IMR-90 (cell line): ENCODE measurements at regions of chr10 and their contacts with region 1.

Region 1: GRCh38 chr10:110871298-110872084 is at the start of gene PDCD4:
- DNase-seq: peak; percentile 96
- ATAC-seq: peak; percentile 92
- H3K4me3 ChIP-seq: peak within 1 kb of the TSS; percentile 54
- H3K27ac ChIP-seq: peak within 1 kb of the TSS; percentile 89
- H3K4me1 ChIP-seq: peaks cover 4% of the 10 kb centered on the region
- H3K27me3 ChIP-seq: no peaks in the 10 kb centered on the region
- CTCF ChIP-seq: no peak
- POLR2A ChIP-seq: peak; percentile 97
- RAD21 ChIP-seq: no peak
- total RNA-seq, gene PDCD4: 10.9 and 46.9 TPM in 2 replicates

Region 2: GRCh38 chr10:110671788-110672579 is 199.5 kb before region 1 on chr10:
- CTCF ChIA-PET with region 1: no interaction called
- POLR2A ChIA-PET with region 1: no interaction called
- dilution Hi-C with region 1: no loop called
- in situ Hi-C with region 1: no loop called
- intact Hi-C with region 1: loop called (anchors 2 kb)
- DNase-seq: peak; percentile 67
- ATAC-seq: peak; percentile 99
- H3K4me3 ChIP-seq: peak overlapping the region; percentile 54
- H3K27ac ChIP-seq: peak overlapping the region; percentile 44
- H3K4me1 ChIP-seq: no peaks in the 10 kb centered on the region
- H3K27me3 ChIP-seq: peaks cover 13% of the 10 kb centered on the region
- CTCF ChIP-seq: peak; percentile 99
- POLR2A ChIP-seq: no peak
- RAD21 ChIP-seq: peak; percentile 66

Region 3: GRCh38 chr10:110746254-110746826 is 125.2 kb before region 1 on chr10:
- CTCF ChIA-PET with region 1: no interaction called
- POLR2A ChIA-PET with region 1: no interaction called
- dilution Hi-C with region 1: no loop called
- in situ Hi-C with region 1: no loop called
- intact Hi-C with region 1: loop called (anchors 1 kb)
- DNase-seq: peak; percentile 71
- ATAC-seq: peak; percentile 90
- H3K4me3 ChIP-seq: no peak overlapping the region
- H3K27ac ChIP-seq: no peak overlapping the region
- H3K4me1 ChIP-seq: no peaks in the 10 kb centered on the region; the same call in 1 of the 2 replicates
- H3K27me3 ChIP-seq: peaks cover 5% of the 10 kb centered on the region
- CTCF ChIP-seq: peak; percentile 81
- POLR2A ChIP-seq: 0 out of 2 replicates have a peak, but pooled peaks have one; percentile 30
- RAD21 ChIP-seq: peak; percentile 90

Region 4: GRCh38 chr10:110803830-110804338 is 67.6 kb before region 1 on chr10:
- CTCF ChIA-PET with region 1: interaction called, 3 read pairs
- POLR2A ChIA-PET with region 1: no interaction called
- dilution Hi-C with region 1: no loop called
- in situ Hi-C with region 1: no loop called
- intact Hi-C with region 1: loop called (anchors 2 kb)
- DNase-seq: peak; percentile 24
- ATAC-seq: peak; percentile 70
- H3K4me3 ChIP-seq: no peak overlapping the region
- H3K27ac ChIP-seq: no peak overlapping the region
- H3K4me1 ChIP-seq: peaks cover 7% of the 10 kb centered on the region; the same call in 1 of the 2 replicates
- H3K27me3 ChIP-seq: peaks cover 5% of the 10 kb centered on the region
- CTCF ChIP-seq: peak; percentile 49
- POLR2A ChIP-seq: no peak
- RAD21 ChIP-seq: peak; percentile 53

Region 5: DNA sequence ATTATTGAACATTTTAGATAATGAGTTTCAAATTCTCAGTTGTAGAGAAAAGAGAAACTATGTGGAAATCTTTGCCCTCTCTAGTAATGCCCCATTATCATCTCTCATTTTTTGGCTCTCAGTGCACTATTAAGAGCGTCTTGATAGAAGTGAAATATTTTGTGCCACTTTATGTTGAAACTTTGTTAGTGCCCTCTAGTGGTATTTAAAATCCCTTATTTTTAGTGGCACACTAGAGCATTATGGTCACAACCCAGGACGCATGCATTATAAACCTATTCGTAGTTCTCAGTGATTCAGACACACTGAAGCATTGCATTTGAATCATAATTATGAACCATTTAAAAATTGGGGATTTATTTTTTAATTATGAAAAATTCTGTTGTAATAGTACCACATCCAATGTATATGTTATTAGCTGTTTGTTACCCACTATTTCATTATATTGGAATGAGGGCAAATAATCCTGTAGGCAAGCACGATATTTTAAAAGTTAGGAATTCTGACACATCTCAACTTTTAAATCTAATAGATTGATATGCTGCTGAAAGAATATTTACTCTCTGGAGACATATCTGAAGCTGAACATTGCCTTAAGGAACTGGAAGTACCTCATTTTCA is 22.2 kb after region 1 on chr10:
- CTCF ChIA-PET with region 1: no interaction called
- POLR2A ChIA-PET with region 1: no interaction called
- dilution Hi-C with region 1: no loop called
- in situ Hi-C with region 1: no loop called
- intact Hi-C with region 1: loop called (anchors 2 kb)
- DNase-seq: peak; percentile 46
- ATAC-seq: peak; percentile 72
- H3K4me3 ChIP-seq: no peak overlapping the region
- H3K27ac ChIP-seq: no peak overlapping the region
- H3K4me1 ChIP-seq: peaks cover 6% of the 10 kb centered on the region
- H3K27me3 ChIP-seq: no peaks in the 10 kb centered on the region
- CTCF ChIP-seq: peak; percentile 52
- POLR2A ChIP-seq: no peak
- RAD21 ChIP-seq: peak; percentile 48

Region 6: DNA sequence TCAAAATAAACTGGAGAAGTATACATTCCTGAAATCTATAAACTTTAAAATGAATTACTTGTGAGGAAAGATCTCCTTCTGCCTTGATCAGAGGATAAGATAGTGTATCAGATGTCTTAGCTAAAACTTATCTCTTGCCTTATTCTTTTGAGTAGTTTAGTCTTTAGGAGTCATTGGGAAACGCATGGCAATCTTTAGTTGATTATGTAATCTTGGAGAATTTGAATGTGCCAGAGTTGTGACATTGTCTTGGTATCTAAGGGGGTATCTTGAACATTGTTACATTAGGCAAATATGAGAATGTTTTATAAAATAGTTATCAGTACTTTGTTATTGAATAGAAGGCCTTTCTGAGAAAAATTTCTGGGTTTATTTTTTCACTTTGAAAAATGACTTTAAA is 143.7 kb after region 1 on chr10:
- CTCF ChIA-PET with region 1: no interaction called
- POLR2A ChIA-PET with region 1: interaction called, 11 read pairs
- dilution Hi-C with region 1: no loop called
- in situ Hi-C with region 1: no loop called
- intact Hi-C with region 1: no loop called
- DNase-seq: no peak
- ATAC-seq: no peak
- H3K4me3 ChIP-seq: no peak overlapping the region
- H3K27ac ChIP-seq: no peak overlapping the region
- H3K4me1 ChIP-seq: no peaks in the 10 kb centered on the region
- H3K27me3 ChIP-seq: no peaks in the 10 kb centered on the region
- CTCF ChIP-seq: no peak
- POLR2A ChIP-seq: no peak
- RAD21 ChIP-seq: no peak

Region 7: GRCh38 chr10:111525696-111526095 is 654.2 kb after region 1 on chr10:
- CTCF ChIA-PET with region 1: no interaction called
- POLR2A ChIA-PET with region 1: no interaction called
- dilution Hi-C with region 1: no loop called
- in situ Hi-C with region 1: no loop called
- intact Hi-C with region 1: no loop called
- DNase-seq: no peak
- ATAC-seq: no peak
- H3K4me3 ChIP-seq: no peak overlapping the region
- H3K27ac ChIP-seq: no peak overlapping the region
- H3K4me1 ChIP-seq: no peaks in the 10 kb centered on the region
- H3K27me3 ChIP-seq: no peaks in the 10 kb centered on the region
- CTCF ChIP-seq: no peak
- POLR2A ChIP-seq: no peak
- RAD21 ChIP-seq: no peak

Region 8: DNA sequence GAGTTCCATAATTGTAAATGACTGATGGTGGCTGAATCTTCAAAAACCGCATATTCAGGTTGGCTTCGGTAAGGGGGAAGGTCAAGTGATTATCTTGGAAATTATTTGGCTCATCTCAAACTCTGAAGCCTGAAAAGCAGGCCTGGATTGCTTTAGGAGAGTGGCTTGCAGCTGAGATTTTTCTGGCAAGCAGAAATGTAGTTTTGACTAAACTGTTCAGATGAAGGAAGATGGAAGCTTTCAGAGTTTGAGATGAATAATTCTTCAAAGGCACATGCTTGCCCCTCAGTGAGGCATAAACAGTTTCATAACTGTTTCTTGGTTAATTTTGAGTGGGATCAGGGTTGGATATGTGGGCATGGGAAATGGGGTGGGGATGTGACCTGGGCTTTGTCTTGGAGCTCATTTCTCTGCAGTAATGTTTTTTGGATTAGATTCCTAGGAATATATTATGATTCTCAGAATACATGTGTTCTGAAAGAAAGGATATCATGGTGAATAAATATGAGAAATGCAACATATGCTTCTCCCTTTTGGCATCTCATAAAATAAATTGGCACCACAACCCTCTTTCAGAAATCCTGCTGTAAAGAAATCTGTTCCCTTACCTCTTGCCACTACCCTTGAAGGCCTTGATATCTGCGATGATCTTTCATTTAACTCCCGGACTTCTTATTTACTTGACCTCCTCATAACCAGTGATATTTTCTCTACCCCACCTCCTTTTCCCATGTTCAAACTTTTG is 674.5 kb after region 1 on chr10:
- CTCF ChIA-PET with region 1: no interaction called
- POLR2A ChIA-PET with region 1: no interaction called
- dilution Hi-C with region 1: no loop called
- in situ Hi-C with region 1: no loop called
- intact Hi-C with region 1: no loop called
- DNase-seq: no peak
- ATAC-seq: no peak
- H3K4me3 ChIP-seq: no peak overlapping the region
- H3K27ac ChIP-seq: no peak overlapping the region
- H3K4me1 ChIP-seq: no peaks in the 10 kb centered on the region
- H3K27me3 ChIP-seq: no peaks in the 10 kb centered on the region
- CTCF ChIP-seq: no peak
- POLR2A ChIP-seq: no peak
- RAD21 ChIP-seq: no peak